H1 (cell line): ENCODE measurements at regions of chr6 and their contacts with region 1.

Region 1: DNA sequence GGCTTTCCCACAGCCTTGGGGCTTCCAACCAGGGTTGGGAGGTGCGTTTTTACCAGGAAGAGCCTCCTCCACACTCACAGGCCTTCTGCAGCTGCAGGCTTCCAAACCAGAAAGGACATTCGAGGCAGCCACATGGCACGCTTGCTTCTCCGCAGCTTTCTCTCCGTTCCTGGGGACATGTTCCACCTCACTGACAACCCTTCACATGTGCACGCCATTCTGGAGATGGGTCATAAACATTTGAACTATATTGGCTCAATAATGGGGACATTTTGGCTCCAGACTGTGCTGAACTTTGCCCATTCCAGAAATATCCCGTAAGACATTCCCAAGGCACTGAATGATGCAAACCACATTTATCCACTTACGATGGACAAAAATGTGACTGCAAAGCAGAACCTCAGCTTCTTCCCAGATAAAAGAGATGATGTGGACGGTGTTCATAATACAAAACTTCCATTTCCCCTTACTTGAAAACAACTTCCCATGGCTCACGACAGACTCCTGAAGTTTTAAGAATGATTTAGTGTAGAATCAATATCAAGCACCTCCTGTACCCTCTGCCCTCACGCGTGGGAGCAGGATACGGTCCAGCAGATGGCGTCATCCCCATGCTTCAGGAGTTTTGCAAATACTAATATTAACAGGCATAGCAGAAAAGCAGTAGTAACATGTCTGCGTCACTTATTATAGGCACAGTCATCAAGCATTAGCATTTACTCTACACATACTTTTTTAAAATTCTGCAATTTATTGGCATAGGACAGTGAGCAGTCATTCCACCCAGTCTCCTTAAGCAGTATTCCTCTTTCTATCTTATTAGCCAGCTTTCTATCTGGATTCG is 25.4 kb upstream of the FOXF2 start:
- DNase-seq: no peak
- H3K4me3 ChIP-seq: no peak overlapping the region
- H3K27ac ChIP-seq: no peak overlapping the region
- H3K4me1 ChIP-seq: peaks cover 0 to 6% (median 0%) of the 10 kb centered on the region in 4 experiments; a peak in 1 of 7 replicates
- H3K27me3 ChIP-seq: 0 out of 7 replicates have a peak, but pooled peaks cover 0 to 3% (median 1%) of the 10 kb centered on the region in 4 experiments
- CTCF ChIP-seq: peak; percentile 59 to 72 (median 67)
- EP300 ChIP-seq: no peak
- POLR2A ChIP-seq: no peak
- RAD21 ChIP-seq: peak; percentile 72 to 78

Region 2: DNA sequence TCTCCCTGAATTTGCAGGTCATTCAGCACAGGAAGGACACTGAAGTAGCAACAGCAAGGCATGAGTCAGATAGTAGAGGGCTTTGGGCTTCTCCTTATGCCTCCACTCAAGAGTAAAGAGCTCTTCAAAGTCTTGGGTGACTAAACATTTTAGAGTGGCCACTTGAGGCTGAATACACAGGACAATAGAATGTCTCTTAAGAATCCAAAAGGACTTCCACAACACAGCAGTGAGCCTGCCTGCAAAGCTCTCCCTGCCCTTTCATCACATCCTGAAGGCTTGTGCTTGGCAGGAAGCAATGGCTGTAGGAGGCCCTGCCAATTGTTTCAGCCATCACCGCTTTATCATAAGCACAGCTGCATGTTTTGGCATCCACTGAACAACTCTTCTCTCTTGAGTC is 15.3 kb before region 1 on chr6:
- CTCF ChIA-PET with region 1: interaction called, 12 read pairs
- POLR2A ChIA-PET with region 1: interaction called, 3 read pairs
- DNase-seq: no peak
- H3K4me3 ChIP-seq: no peak overlapping the region
- H3K27ac ChIP-seq: peak overlapping the region; percentile 16; the same call in 1 of the 2 replicates
- H3K4me1 ChIP-seq: peaks cover 3 to 7% (median 4%) of the 10 kb centered on the region in 4 experiments; a peak in 6 of 7 replicates
- H3K27me3 ChIP-seq: 0 out of 7 replicates have a peak, but pooled peaks cover 0 to 2% (median 0%) of the 10 kb centered on the region in 4 experiments
- CTCF ChIP-seq: no peak
- EP300 ChIP-seq: no peak
- POLR2A ChIP-seq: no peak
- RAD21 ChIP-seq: no peak